ENCODE measurements at regions of chr4 and their contacts with region 1.

Region 1: DNA sequence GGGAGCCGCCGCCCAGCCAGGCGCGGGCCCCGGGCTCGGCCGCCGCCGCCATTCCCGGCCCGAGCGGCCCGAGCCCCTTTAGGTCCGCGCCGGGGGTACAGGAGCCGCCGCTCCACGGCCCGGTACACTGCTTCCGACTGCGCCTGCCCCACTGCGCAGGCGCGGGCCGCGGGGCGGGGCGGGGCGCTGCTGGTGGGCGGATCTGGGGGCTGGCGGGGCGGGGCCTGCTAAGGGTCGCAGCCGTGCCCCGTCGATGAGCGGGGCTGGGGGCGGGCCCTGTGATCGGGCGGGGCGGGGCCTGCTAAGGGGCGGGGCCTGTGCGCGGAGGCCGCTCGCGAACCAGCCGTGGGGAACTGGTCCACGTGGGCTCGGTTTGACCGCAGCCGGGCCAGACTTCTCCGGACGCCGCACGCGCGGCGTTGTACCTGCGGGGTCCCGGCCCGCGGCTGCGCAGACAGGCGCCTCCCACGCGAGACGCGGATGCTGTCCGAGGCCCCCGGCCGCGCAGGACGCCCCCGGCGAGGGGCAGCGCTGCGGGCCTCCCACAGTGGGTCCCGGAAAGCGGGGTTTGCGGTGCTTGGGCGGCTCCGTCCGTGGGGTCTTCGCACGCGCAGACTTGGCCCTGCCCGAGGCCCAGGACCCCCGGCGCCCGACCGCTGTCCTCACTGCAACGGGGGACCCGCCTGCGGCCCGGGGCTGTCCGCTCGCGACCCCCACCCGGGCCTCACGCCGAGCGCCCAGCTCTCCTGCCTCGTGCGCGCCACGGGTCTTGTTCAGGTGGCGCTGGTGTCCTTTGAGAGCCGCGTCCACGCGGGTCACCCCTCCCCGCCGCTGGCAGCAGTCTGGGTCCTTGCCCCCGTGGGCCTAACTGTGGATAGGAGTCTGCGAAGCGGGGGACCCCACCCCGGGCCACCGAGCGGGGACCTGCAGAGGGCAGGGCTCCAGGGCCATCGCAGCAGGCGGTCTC is at the start of gene DGKQ:
- DNase-seq: peak; percentile 79
- H3K4me3 Mint-ChIP-seq: peak within 1 kb of the TSS; percentile 52
- H3K27ac Mint-ChIP-seq: no peak within 1 kb of the TSS
- H3K4me1 Mint-ChIP-seq: no peaks in the 10 kb centered on the region
- H3K27me3 Mint-ChIP-seq: no peaks in the 10 kb centered on the region
- total RNA-seq, gene DGKQ: 13.0 and 14.4 TPM in 2 replicates

Region 2: DNA sequence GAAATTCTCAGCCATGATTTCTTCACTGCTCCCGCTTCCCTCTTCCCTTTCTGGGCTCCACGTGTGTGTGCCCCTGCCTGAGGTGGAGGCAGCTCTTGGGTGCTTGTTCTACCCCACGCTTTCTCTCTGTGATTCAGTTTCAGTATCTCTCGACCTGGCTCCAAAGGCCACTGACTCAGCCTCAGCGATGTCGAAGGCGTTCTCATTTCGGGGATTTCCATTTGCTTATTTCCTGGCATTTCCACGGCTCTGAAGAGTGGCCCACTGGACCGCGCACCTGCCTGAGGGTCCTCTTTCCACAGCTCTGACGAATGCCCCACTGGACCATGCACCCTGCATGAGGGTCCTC is 94.0 kb before region 1 on chr4:
- intact Hi-C with region 1: loop called (anchors 1 kb)
- DNase-seq: peak; percentile 50
- H3K4me3 Mint-ChIP-seq: peak overlapping the region; percentile 81
- H3K27ac Mint-ChIP-seq: peak overlapping the region; percentile 98
- H3K4me1 Mint-ChIP-seq: peaks cover 29% of the 10 kb centered on the region
- H3K27me3 Mint-ChIP-seq: no peaks in the 10 kb centered on the region

Region 3: GRCh38 chr4:986879-987623 is 13.3 kb after region 1 on chr4 and contains the start of gene IDUA:
- intact Hi-C with region 1: loop called (anchors 1 kb)
- DNase-seq: peak; percentile 80
- H3K4me3 Mint-ChIP-seq: peak within 1 kb of the TSS; percentile 87
- H3K27ac Mint-ChIP-seq: peak within 1 kb of the TSS; percentile 83
- H3K4me1 Mint-ChIP-seq: peaks cover 17% of the 10 kb centered on the region
- H3K27me3 Mint-ChIP-seq: no peaks in the 10 kb centered on the region
- total RNA-seq, gene IDUA: 23.6 and 25.5 TPM in 2 replicates

Region 4: GRCh38 chr4:1011022-1011694 is 37.4 kb after region 1 on chr4 and contains the start of gene FGFRL1:
- intact Hi-C with region 1: loop called (anchors 2 kb)
- DNase-seq: peak; percentile 89
- H3K4me3 Mint-ChIP-seq: peak within 1 kb of the TSS; percentile 82
- H3K27ac Mint-ChIP-seq: peak within 1 kb of the TSS; percentile 89
- H3K4me1 Mint-ChIP-seq: peaks cover 9% of the 10 kb centered on the region
- H3K27me3 Mint-ChIP-seq: peaks cover 25% of the 10 kb centered on the region
- total RNA-seq, gene FGFRL1: 17.5 TPM in 2 replicates